PC-9 (cell line): ENCODE measurements at regions of chr22 and their contacts with region 1.

Region 1: DNA sequence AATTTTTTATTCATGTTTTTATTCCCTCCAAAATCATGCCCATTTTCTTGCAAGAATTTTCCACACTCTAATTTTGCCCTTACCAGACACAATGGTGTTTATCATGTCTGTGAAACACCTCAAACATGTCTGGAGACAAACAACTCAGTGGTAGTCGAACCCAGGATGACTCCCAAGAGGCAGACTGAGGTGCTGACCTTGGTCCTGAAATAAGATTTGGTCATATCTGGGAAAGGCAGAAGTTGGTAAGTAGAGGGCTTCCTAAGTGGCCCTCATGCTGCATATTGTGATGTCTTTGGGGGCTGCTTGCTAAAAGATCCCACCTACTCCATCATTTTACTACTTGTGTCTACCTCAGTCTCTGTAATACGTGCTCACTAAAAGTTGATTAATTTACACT is 369.4 kb upstream of the ISX start:
- DNase-seq: no peak
- H3K4me3 ChIP-seq: no peak overlapping the region
- H3K27ac ChIP-seq: no peak overlapping the region
- H3K4me1 ChIP-seq: no peaks in the 10 kb centered on the region
- H3K27me3 ChIP-seq: no peaks in the 10 kb centered on the region
- CTCF ChIP-seq: no peak

Region 2: GRCh38 chr22:34639919-34640318 is 56.6 kb before region 1 on chr22:
- CTCF ChIA-PET with region 1: no interaction called
- POLR2A ChIA-PET with region 1: no interaction called
- intact Hi-C with region 1: loop called (anchors 10 kb)
- DNase-seq: peak in 1 of 2 experiments; percentile 39
- H3K4me3 ChIP-seq: no peak overlapping the region
- H3K27ac ChIP-seq: no peak overlapping the region
- H3K4me1 ChIP-seq: no peaks in the 10 kb centered on the region
- H3K27me3 ChIP-seq: peaks cover 62% of the 10 kb centered on the region
- CTCF ChIP-seq: no peak